MCF 10A (cell line): ENCODE measurements at regions of chr3 and their contacts with region 1.

Region 1: GRCh38 chr3:13895155-13896105 is 15.6 kb upstream of the WNT7A start:
- DNase-seq: peak; percentile 95
- H3K4me3 Mint-ChIP-seq: peak overlapping the region; percentile 81
- H3K27ac Mint-ChIP-seq: peak overlapping the region; percentile 88
- H3K4me1 Mint-ChIP-seq: peaks cover 4% of the 10 kb centered on the region
- H3K27me3 Mint-ChIP-seq: no peaks in the 10 kb centered on the region
- CTCF ChIP-seq: no peak

Region 2: GRCh38 chr3:14113965-14114635 is 218.7 kb after region 1 on chr3:
- CTCF ChIA-PET with region 1: interaction called, 80 read pairs
- POLR2A ChIA-PET with region 1: interaction called, 16 read pairs
- intact Hi-C with region 1: loop called (anchors 1 kb)
- DNase-seq: no peak
- H3K4me3 Mint-ChIP-seq: no peak overlapping the region
- H3K27ac Mint-ChIP-seq: no peak overlapping the region
- H3K4me1 Mint-ChIP-seq: no peaks in the 10 kb centered on the region
- H3K27me3 Mint-ChIP-seq: no peaks in the 10 kb centered on the region
- CTCF ChIP-seq: peak; percentile 13

Region 3: GRCh38 chr3:14144423-14145075 is 249.1 kb after region 1 on chr3:
- CTCF ChIA-PET with region 1: interaction called, 7 read pairs
- POLR2A ChIA-PET with region 1: interaction called, 13 read pairs
- intact Hi-C with region 1: no loop called
- DNase-seq: peak; percentile 97
- H3K4me3 Mint-ChIP-seq: peak overlapping the region; percentile 65
- H3K27ac Mint-ChIP-seq: peak overlapping the region; percentile 99
- H3K4me1 Mint-ChIP-seq: peaks cover 46% of the 10 kb centered on the region
- H3K27me3 Mint-ChIP-seq: no peaks in the 10 kb centered on the region
- CTCF ChIP-seq: no peak

Region 4: DNA sequence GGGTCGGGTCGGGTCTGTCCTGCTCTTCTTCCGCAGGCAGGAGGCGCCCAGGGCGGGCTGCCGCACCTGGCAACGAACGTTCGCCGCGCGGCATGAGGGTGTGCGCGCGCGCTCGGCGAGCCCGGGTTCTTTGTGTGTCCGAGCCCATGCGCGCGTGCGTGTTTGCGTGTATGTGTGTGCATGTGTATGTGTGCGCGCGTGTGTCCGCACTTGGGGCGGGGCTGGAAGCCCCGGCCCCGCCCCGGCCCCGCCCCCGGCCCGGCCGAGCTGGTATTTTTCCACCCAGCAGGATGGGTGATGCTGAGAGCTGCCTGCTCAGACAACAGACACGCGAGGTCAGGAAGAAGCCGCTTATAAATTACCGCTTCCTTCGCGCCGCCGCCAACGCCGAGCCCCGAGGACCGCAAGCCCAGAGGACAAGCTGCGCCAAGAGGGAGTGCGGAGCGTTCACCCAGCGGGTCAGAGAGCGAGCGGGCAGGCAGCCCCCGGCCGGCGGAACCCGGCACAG is 506.9 kb after region 1 on chr3 and contains the start of gene SLC6A6:
- CTCF ChIA-PET with region 1: interaction called, 3 read pairs
- POLR2A ChIA-PET with region 1: no interaction called
- intact Hi-C with region 1: loop called (anchors 2 kb)
- DNase-seq: peak; percentile 96
- H3K4me3 Mint-ChIP-seq: peak within 1 kb of the TSS; percentile 99
- H3K27ac Mint-ChIP-seq: peak within 1 kb of the TSS; percentile 86
- H3K4me1 Mint-ChIP-seq: peaks cover 6% of the 10 kb centered on the region
- H3K27me3 Mint-ChIP-seq: no peaks in the 10 kb centered on the region
- CTCF ChIP-seq: peak; percentile 53
- total RNA-seq, gene SLC6A6: 4.6 and 7.6 TPM in 2 replicates

Region 5: DNA sequence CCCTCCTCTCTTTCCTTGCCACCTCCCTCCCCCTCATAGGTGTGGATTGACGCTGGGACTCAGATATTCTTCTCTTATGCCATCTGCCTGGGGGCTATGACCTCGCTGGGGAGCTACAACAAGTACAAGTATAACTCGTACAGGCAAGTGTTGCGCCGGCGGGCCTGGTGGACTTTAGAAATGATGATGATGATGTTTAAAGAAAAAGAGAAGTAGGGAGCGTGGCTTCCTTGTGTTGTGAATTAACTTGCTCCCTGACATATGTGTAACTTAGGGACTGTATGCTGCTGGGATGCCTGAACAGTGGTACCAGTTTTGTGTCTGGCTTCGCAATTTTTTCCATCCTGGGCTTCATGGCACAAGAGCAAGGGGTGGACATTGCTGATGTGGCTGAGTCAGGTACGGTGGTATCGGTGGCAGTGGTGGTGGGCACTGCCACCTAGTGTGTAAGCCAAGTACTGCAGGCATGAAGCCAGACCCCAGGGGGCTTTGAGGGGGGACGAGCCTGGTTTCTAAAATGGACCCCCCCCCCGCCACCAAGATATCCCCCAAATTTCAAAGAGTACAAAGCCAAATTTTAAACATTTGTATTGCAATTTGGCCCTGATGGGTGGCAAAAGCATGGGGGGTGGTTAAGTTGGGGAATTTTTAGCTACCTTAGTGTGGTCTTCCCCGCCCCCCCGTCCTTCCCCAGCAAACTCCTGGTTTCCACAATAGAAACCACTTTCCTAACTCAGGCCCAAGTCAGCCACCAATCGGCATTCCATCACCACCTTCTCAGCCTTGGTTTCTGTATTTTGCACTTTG is 572.6 kb after region 1 on chr3:
- CTCF ChIA-PET with region 1: interaction called, 5 read pairs
- POLR2A ChIA-PET with region 1: no interaction called
- intact Hi-C with region 1: loop called (anchors 2 kb)
- DNase-seq: peak; percentile 34
- H3K4me3 Mint-ChIP-seq: no peak overlapping the region
- H3K27ac Mint-ChIP-seq: no peak overlapping the region
- H3K4me1 Mint-ChIP-seq: peaks cover 9% of the 10 kb centered on the region
- H3K27me3 Mint-ChIP-seq: no peaks in the 10 kb centered on the region
- CTCF ChIP-seq: peak; percentile 92